Pancreas (tissue), 10 donors: ENCODE measurements at regions of chr5 and their contacts with region 1.

Region 1: GRCh38 chr5:177399997-177400868 is at the start of gene PFN3:
- DNase-seq: no peak
- ATAC-seq: no peak
- H3K4me3 ChIP-seq: no peak within 1 kb of the TSS
- H3K27ac ChIP-seq: no peak within 1 kb of the TSS
- H3K4me1 ChIP-seq: peaks cover 4 to 14% (median 8%) of the 10 kb centered on the region in 3 donors
- H3K27me3 ChIP-seq: peaks cover 0 to 8% (median 0%) of the 10 kb centered on the region in 4 donors
- CTCF ChIP-seq: no peak
- total RNA-seq, gene PFN3: not detected

Region 2: DNA sequence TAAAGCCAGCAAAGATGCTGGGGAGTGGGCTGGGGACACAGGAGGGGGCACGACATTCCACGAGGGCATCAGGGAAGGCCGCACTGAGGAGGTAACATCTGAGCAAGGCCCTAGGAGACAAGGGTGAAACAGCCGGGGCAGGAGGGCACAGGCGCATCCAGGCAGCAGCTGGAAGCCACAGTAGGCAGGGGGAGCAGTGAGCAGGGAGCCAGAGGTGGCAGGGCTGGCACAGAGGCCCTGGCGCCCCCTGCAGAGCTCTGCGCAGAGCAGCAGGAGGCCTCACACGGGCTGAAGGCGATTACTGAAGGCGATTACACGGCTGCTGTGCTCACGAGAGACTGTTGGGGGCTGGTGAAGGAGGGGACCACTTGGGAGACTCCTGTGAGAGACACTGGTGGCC is 64.1 kb before region 1 on chr5:
- intact Hi-C with region 1: no loop called
- DNase-seq: peak in 1 of 6 donors; percentile 64
- ATAC-seq: peak in 3 of 4 donors; percentile 42 to 78 (median 54)
- H3K4me3 ChIP-seq: no peak overlapping the region
- H3K27ac ChIP-seq: no peak overlapping the region
- H3K4me1 ChIP-seq: no peaks in the 10 kb centered on the region
- H3K27me3 ChIP-seq: no peaks in the 10 kb centered on the region
- CTCF ChIP-seq: no peak

Region 3: DNA sequence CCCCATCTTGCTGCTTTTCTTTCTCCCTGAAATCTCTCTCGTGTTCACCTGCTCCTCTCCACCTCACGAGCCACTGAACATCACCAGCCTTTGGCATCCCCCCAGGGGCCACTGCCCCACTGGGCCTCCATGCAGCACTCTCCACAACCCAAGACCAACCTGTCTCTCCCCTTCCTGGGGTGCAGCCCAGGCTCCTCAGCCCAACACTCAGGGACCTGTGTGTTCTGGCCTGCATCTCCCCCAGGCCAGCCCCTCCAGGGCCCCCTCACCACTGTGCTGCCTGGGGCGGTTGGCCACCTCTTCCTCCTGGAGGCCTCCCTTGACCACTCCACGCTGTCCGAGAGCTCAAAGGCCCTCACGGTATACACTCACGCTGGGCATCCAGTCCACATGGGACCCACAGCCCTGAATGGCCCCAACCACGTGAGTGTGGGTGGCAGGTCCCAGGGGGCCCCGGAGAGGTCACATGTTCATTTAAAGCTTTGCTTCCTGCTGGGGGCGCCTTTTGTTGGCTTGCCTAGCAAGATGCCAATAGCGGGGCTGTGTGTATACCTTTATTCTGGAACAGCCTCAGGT is 109.8 kb after region 1 on chr5:
- intact Hi-C with region 1: loop called in 1 of 3 experiments (anchors 5 kb)
- DNase-seq: peak in 1 of 6 donors; percentile 54
- ATAC-seq: peak in 2 of 4 donors; percentile 3 to 20
- H3K4me3 ChIP-seq: peak overlapping the region in 1 of 4 donors; percentile 40
- H3K27ac ChIP-seq: peak overlapping the region in 2 of 4 donors; percentile 25 to 40
- H3K4me1 ChIP-seq: peaks cover 0 to under 1% (median 0%) of the 10 kb centered on the region in 3 donors
- H3K27me3 ChIP-seq: no peaks in the 10 kb centered on the region
- CTCF ChIP-seq: no peak